Naive thymus-derived CD8-positive, alpha-beta T cell (primary cell): ENCODE measurements at regions of chr6 and their contacts with region 1.

Region 1: DNA sequence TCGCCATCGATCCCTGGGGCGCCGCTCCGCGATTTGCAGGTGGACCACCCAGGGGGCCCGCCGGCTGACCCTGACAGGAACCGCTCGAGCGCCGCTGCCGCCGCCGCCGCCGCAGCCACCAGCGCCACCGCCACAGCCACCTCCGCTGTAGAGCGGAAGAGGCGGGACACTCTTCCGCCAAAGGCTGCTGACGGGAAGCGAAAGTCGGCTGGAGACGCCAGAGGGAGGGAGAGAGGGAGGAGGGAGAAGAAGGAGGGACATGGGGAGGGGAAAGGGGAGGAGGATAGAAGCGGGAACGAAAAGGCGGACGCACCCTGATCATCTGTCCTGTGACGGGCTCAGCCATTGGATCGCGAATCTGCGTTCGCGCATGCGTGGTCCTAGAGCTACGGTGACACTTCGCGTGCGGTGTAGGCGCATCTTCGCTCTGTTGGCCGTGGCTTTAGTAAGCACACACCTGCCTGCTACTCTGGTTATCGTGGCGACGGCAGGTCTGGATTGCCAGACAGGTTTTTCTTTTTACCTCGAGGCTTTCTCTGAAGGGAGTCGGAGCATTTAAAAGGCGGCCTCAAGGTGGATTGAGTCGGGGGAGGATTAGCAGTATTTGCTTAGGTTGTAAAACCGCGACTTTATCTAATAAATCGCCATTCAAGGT is at the start of gene TMEM30A:
- DNase-seq: peak; percentile 89 to 97 (median 94)
- ATAC-seq: peak; percentile 89 to 90
- H3K4me3 Mint-ChIP-seq: no peak within 1 kb of the TSS
- H3K27ac Mint-ChIP-seq: no peak within 1 kb of the TSS
- H3K4me1 Mint-ChIP-seq: peaks cover 14 to 47% (median 26%) of the 10 kb centered on the region in 4 donors
- H3K27me3 Mint-ChIP-seq: no peaks in the 10 kb centered on the region
- polyA plus RNA-seq, gene TMEM30A: 36.8 to 50.9 (median 37.8) TPM

Region 2: GRCh38 chr6:75210885-75211739 is 73.6 kb before region 1 on chr6:
- POLR2A ChIA-PET with region 1: no interaction called
- DNase-seq: peak in 7 of 10 donors; percentile 31 to 64 (median 55)
- ATAC-seq: no peak
- H3K4me3 Mint-ChIP-seq: no peak overlapping the region
- H3K27ac Mint-ChIP-seq: no peak overlapping the region
- H3K4me1 Mint-ChIP-seq: peaks cover 23 to 32% (median 31%) of the 10 kb centered on the region in 4 donors
- H3K27me3 Mint-ChIP-seq: peaks cover 46 to 65% (median 52%) of the 10 kb centered on the region in 5 donors

Region 3: GRCh38 chr6:75243333-75244062 is 41.3 kb before region 1 on chr6 and contains the start of gene COX7A2:
- POLR2A ChIA-PET with region 1: interaction called, 30 read pairs
- DNase-seq: peak; percentile 64 to 92 (median 82)
- ATAC-seq: peak; percentile 96 to 97
- H3K4me3 Mint-ChIP-seq: peak within 1 kb of the TSS; percentile 96 to 100 (median 98)
- H3K27ac Mint-ChIP-seq: peak within 1 kb of the TSS; percentile 96 to 99 (median 99)
- H3K4me1 Mint-ChIP-seq: peaks cover 6 to 39% (median 31%) of the 10 kb centered on the region in 4 donors
- H3K27me3 Mint-ChIP-seq: peaks cover 0 to 18% (median 0%) of the 10 kb centered on the region in 5 donors
- polyA plus RNA-seq, gene COX7A2: 788 to 1,025 (median 870) TPM